Caco-2 (cell line): ENCODE measurements at regions of chr11 and their contacts with region 1.

Region 1: GRCh38 chr11:124402326-124402922 is 3.6 kb upstream of the OR8B3 start:
- DNase-seq: peak; percentile 84 to 90
- H3K4me3 ChIP-seq: no peak overlapping the region
- H3K4me3 Mint-ChIP-seq: no peak overlapping the region
- H3K27ac Mint-ChIP-seq: peak overlapping the region; percentile 30
- H3K4me1 ChIP-seq: no peaks in the 10 kb centered on the region
- H3K4me1 Mint-ChIP-seq: peaks cover 6% of the 10 kb centered on the region
- H3K27me3 ChIP-seq: no peaks in the 10 kb centered on the region
- H3K27me3 Mint-ChIP-seq: peaks cover 4% of the 10 kb centered on the region
- CTCF ChIP-seq: peak; percentile 88 to 92

Region 2: GRCh38 chr11:123822032-123822431 is 580.4 kb before region 1 on chr11:
- CTCF ChIA-PET with region 1: no interaction called
- POLR2A ChIA-PET with region 1: no interaction called
- intact Hi-C with region 1: no loop called
- DNase-seq: peak in 1 of 2 experiments; percentile 44
- H3K4me3 ChIP-seq: no peak overlapping the region
- H3K4me3 Mint-ChIP-seq: peak overlapping the region; percentile 54
- H3K27ac Mint-ChIP-seq: peak overlapping the region; percentile 91
- H3K4me1 ChIP-seq: peaks cover 24% of the 10 kb centered on the region
- H3K4me1 Mint-ChIP-seq: peaks cover 19% of the 10 kb centered on the region
- H3K27me3 ChIP-seq: no peaks in the 10 kb centered on the region
- H3K27me3 Mint-ChIP-seq: no peaks in the 10 kb centered on the region
- CTCF ChIP-seq: no peak

Region 3: GRCh38 chr11:124315052-124315451 is 87.4 kb before region 1 on chr11:
- CTCF ChIA-PET with region 1: no interaction called
- POLR2A ChIA-PET with region 1: no interaction called
- intact Hi-C with region 1: no loop called
- DNase-seq: no peak
- H3K4me3 ChIP-seq: no peak overlapping the region
- H3K4me3 Mint-ChIP-seq: no peak overlapping the region
- H3K27ac Mint-ChIP-seq: no peak overlapping the region
- H3K4me1 ChIP-seq: no peaks in the 10 kb centered on the region
- H3K4me1 Mint-ChIP-seq: peaks cover 5% of the 10 kb centered on the region
- H3K27me3 ChIP-seq: peaks cover 2% of the 10 kb centered on the region; the same call in 1 of the 2 replicates
- H3K27me3 Mint-ChIP-seq: peaks cover 22% of the 10 kb centered on the region
- CTCF ChIP-seq: no peak

Region 4: GRCh38 chr11:124536520-124536919 is 134.1 kb after region 1 on chr11:
- CTCF ChIA-PET with region 1: interaction called, 4 read pairs
- POLR2A ChIA-PET with region 1: no interaction called
- intact Hi-C with region 1: loop called (anchors 1 kb)
- DNase-seq: peak; percentile 66 to 80
- H3K4me3 ChIP-seq: no peak overlapping the region
- H3K4me3 Mint-ChIP-seq: no peak overlapping the region
- H3K27ac Mint-ChIP-seq: no peak overlapping the region
- H3K4me1 ChIP-seq: no peaks in the 10 kb centered on the region
- H3K4me1 Mint-ChIP-seq: no peaks in the 10 kb centered on the region
- H3K27me3 ChIP-seq: no peaks in the 10 kb centered on the region
- H3K27me3 Mint-ChIP-seq: peaks cover 23% of the 10 kb centered on the region
- CTCF ChIP-seq: no peak

Region 5: DNA sequence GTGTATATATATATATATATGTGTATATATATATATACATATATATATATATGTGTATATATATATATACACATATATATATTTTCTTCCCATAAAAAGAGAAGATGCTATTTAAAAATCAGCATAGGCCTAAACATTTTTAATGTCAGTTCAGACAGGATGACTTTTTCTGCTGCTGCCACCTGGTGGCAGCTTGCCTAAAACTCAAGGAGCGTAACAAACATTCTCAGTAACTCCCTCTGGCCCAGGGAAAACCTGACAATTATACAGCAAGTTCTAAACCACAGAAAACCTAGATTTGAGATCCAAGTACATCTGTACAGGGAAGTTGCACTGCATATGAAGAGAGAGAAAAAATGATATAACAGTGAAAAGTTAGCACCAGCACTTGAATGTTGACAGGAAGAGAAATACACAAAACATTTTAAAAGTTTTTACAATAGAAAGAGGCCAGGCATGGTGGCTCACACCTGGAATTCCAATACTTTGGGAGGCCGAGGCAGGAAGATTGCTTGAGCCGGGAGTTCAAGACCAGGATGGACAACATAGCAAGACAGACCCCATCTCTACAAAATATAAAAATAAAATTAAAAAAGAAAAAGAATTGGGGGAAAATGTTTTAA is 183.9 kb after region 1 on chr11:
- CTCF ChIA-PET with region 1: no interaction called
- POLR2A ChIA-PET with region 1: no interaction called
- intact Hi-C with region 1: loop called (anchors 1 kb)
- DNase-seq: peak; percentile 59 to 73
- H3K4me3 ChIP-seq: no peak overlapping the region
- H3K4me3 Mint-ChIP-seq: no peak overlapping the region
- H3K27ac Mint-ChIP-seq: no peak overlapping the region
- H3K4me1 ChIP-seq: no peaks in the 10 kb centered on the region
- H3K4me1 Mint-ChIP-seq: no peaks in the 10 kb centered on the region
- H3K27me3 ChIP-seq: peaks cover 2% of the 10 kb centered on the region
- H3K27me3 Mint-ChIP-seq: peaks cover 32% of the 10 kb centered on the region
- CTCF ChIP-seq: peak; percentile 79 to 91

Region 6: GRCh38 chr11:124644426-124645280 is 242.2 kb after region 1 on chr11:
- CTCF ChIA-PET with region 1: no interaction called
- POLR2A ChIA-PET with region 1: no interaction called
- intact Hi-C with region 1: loop called (anchors 2 kb)
- DNase-seq: peak; percentile 77 to 79
- H3K4me3 ChIP-seq: 0 out of 2 replicates have a peak overlapping the region, but pooled peaks have one; percentile 1
- H3K4me3 Mint-ChIP-seq: peak overlapping the region; percentile 54
- H3K27ac Mint-ChIP-seq: no peak overlapping the region
- H3K4me1 ChIP-seq: no peaks in the 10 kb centered on the region
- H3K4me1 Mint-ChIP-seq: no peaks in the 10 kb centered on the region
- H3K27me3 ChIP-seq: no peaks in the 10 kb centered on the region
- H3K27me3 Mint-ChIP-seq: no peaks in the 10 kb centered on the region
- CTCF ChIP-seq: peak; percentile 92 to 99

Region 7: DNA sequence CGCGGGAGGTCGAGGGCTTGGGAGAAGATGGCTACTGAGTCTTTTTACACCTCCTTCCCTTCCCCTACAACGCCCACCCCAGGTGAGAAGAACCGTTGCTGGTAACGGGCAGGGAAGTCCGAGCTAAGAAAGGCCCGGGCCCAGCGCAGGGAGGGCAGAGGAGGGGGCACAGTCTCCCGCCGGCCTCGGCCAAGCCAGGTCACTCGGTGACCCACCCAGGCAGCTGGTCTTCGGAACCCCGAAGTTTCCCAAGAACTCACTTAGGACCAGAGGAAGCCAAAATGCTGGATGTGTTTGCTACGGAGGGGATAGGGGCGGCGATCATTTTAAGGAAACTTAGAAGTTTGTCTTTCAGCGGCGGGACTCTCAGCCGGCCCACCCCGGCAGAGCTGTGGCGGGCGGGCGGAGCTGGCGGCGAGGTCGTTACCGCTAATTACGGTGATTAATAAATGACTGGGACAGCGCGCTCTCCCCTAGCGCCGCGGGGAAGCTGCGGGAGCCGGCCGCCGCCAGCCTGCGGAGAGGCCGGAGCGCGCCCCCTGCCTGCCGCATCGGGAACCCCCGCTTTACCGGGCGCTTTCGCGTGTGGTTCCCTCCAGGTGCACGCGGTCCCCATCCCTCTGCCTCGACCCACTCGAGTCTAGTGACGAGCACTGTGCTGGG is 463.6 kb after region 1 on chr11:
- CTCF ChIA-PET with region 1: no interaction called
- POLR2A ChIA-PET with region 1: no interaction called
- intact Hi-C with region 1: loop called (anchors 1 kb)
- DNase-seq: peak; percentile 58 to 83
- H3K4me3 ChIP-seq: peak overlapping the region; percentile 19
- H3K4me3 Mint-ChIP-seq: peak overlapping the region; percentile 32
- H3K27ac Mint-ChIP-seq: no peak overlapping the region
- H3K4me1 ChIP-seq: peaks cover 22% of the 10 kb centered on the region
- H3K4me1 Mint-ChIP-seq: peaks cover 7% of the 10 kb centered on the region
- H3K27me3 ChIP-seq: peaks cover 16% of the 10 kb centered on the region
- H3K27me3 Mint-ChIP-seq: peaks cover 48% of the 10 kb centered on the region
- CTCF ChIP-seq: peak; percentile 91 to 98